ENCODE measurements at regions of chr16 and their contacts with region 1.

Region 1: DNA sequence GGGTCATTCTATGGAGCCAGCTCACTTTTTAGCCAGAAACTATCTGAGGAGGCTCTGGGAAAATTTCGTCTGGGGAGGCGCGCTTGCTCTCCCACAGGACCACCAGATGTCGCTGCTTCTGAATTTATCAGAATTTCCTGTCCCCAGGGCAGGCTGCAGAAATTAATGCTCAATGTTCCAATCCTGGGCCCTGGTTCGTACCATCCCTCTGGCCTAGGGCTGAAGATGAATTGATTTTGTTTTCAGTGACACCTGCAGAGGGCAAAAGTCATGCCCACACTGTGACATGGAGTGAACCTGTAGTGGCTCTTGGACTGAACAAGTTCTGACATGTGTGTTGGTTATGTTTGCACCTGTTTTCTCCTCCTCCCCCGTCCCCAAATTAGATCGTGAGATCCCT is 482.6 kb downstream of the NPIPA7 start:
- DNase-seq: peak; percentile 46
- ATAC-seq: peak; percentile 94
- H3K4me3 ChIP-seq: no peak overlapping the region
- H3K27ac ChIP-seq: no peak overlapping the region
- H3K4me1 ChIP-seq: peaks cover 4% of the 10 kb centered on the region; the same call in 1 of the 2 replicates
- H3K27me3 ChIP-seq: no peaks in the 10 kb centered on the region; a peak in 1 of 4 replicates
- CTCF ChIP-seq: peak; percentile 70 to 87 (median 86)
- EP300 ChIP-seq: no peak
- POLR2A ChIP-seq: no peak
- RAD21 ChIP-seq: peak; percentile 83

Region 2: GRCh38 chr16:16774389-16774788 is 87.2 kb before region 1 on chr16:
- CTCF ChIA-PET with region 1: no interaction called
- POLR2A ChIA-PET with region 1: no interaction called
- RAD21 ChIA-PET with region 1: no interaction called
- SMC1A ChIA-PET with region 1: no interaction called
- in situ Hi-C with region 1: no loop called
- intact Hi-C with region 1: no loop called
- DNase-seq: no peak
- ATAC-seq: no peak
- H3K4me3 ChIP-seq: no peak overlapping the region
- H3K27ac ChIP-seq: no peak overlapping the region
- H3K4me1 ChIP-seq: no peaks in the 10 kb centered on the region
- H3K27me3 ChIP-seq: no peaks in the 10 kb centered on the region
- CTCF ChIP-seq: no peak
- EP300 ChIP-seq: no peak
- POLR2A ChIP-seq: no peak
- RAD21 ChIP-seq: no peak

Region 3: DNA sequence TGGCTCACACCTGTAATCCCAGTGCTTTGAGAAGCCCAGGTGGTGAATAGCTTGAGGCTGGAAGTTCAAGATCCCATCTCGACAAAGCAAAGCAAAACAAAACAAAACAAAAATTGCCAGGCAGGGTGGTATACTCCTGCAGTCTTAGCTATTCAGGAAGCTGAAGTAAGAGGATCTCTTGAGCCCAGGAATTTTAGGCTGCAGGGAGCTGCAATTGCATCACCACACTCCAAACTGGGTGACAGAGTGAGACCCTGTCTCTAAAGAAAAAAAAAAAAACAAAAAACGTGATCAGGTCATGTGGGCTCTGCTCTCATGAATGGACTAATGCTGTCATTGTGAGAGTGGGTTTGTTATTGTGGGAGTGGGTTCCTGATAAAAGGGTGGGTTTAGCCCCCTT is 73.5 kb before region 1 on chr16:
- CTCF ChIA-PET with region 1: no interaction called
- POLR2A ChIA-PET with region 1: no interaction called
- RAD21 ChIA-PET with region 1: no interaction called
- SMC1A ChIA-PET with region 1: no interaction called
- in situ Hi-C with region 1: no loop called
- intact Hi-C with region 1: no loop called
- DNase-seq: no peak
- ATAC-seq: no peak
- H3K4me3 ChIP-seq: no peak overlapping the region
- H3K27ac ChIP-seq: no peak overlapping the region
- H3K4me1 ChIP-seq: no peaks in the 10 kb centered on the region
- H3K27me3 ChIP-seq: no peaks in the 10 kb centered on the region
- CTCF ChIP-seq: no peak
- EP300 ChIP-seq: no peak
- POLR2A ChIP-seq: no peak
- RAD21 ChIP-seq: no peak

Region 4: GRCh38 chr16:16879567-16880256 is 18.2 kb after region 1 on chr16:
- CTCF ChIA-PET with region 1: interaction called, 14 read pairs
- POLR2A ChIA-PET with region 1: no interaction called
- RAD21 ChIA-PET with region 1: no interaction called
- SMC1A ChIA-PET with region 1: interaction called, 5 read pairs
- in situ Hi-C with region 1: no loop called
- intact Hi-C with region 1: no loop called
- DNase-seq: no peak
- ATAC-seq: no peak
- H3K4me3 ChIP-seq: no peak overlapping the region
- H3K27ac ChIP-seq: no peak overlapping the region
- H3K4me1 ChIP-seq: no peaks in the 10 kb centered on the region
- H3K27me3 ChIP-seq: no peaks in the 10 kb centered on the region
- CTCF ChIP-seq: no peak
- EP300 ChIP-seq: no peak
- POLR2A ChIP-seq: no peak
- RAD21 ChIP-seq: no peak

Region 5: GRCh38 chr16:17070882-17071592 is 209.5 kb after region 1 on chr16:
- CTCF ChIA-PET with region 1: interaction called, 6 read pairs
- POLR2A ChIA-PET with region 1: interaction called, 5 read pairs
- RAD21 ChIA-PET with region 1: interaction called, 16 read pairs
- SMC1A ChIA-PET with region 1: interaction called, 11 read pairs
- in situ Hi-C with region 1: no loop called
- intact Hi-C with region 1: loop called (anchors 5 kb)
- DNase-seq: peak; percentile 98
- ATAC-seq: peak; percentile 81
- H3K4me3 ChIP-seq: peak overlapping the region; percentile 77
- H3K27ac ChIP-seq: peak overlapping the region; percentile 95
- H3K4me1 ChIP-seq: peaks cover 44% of the 10 kb centered on the region
- H3K27me3 ChIP-seq: no peaks in the 10 kb centered on the region
- CTCF ChIP-seq: 0 out of 6 replicates have a peak, but pooled peaks of 1 of the 3 experiments have one; percentile 16
- EP300 ChIP-seq: peak; percentile 89 to 94
- POLR2A ChIP-seq: no peak
- RAD21 ChIP-seq: 0 out of 2 replicates have a peak, but pooled peaks have one; percentile 23

Region 6: DNA sequence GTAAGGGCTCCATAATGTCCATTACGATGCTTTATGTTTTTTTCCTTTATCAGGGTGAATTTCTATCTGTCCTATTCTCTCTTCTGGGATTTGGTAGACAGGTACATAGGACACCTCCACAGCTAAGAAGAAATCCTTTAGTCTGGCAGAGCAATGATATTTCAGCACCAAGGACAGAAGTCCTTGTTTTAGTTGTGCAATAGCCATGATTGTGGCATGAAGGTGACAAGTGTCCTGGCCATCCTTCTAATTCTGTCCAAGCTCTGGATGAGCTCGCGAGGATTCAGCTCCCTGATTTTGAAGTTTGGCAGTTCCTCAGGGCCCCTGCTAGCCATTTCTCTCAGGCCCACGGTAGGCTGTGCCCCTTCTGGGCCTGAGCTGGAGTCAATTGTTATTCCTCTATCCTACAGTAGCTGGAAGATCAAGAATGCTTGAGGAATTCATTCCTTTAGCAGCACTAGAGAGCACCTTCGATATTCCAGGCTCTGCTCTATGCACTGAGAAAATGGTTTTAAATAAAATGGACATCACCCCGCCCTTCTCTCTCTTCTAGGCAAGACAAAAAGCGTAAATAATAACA is 288.4 kb after region 1 on chr16:
- CTCF ChIA-PET with region 1: interaction called, 14 read pairs
- POLR2A ChIA-PET with region 1: no interaction called
- RAD21 ChIA-PET with region 1: interaction called, 3 read pairs
- SMC1A ChIA-PET with region 1: interaction called, 4 read pairs
- in situ Hi-C with region 1: no loop called
- intact Hi-C with region 1: no loop called
- DNase-seq: no peak
- ATAC-seq: no peak
- H3K4me3 ChIP-seq: no peak overlapping the region
- H3K27ac ChIP-seq: no peak overlapping the region
- H3K4me1 ChIP-seq: 0 out of 2 replicates have a peak, but pooled peaks cover 3% of the 10 kb centered on the region
- H3K27me3 ChIP-seq: no peaks in the 10 kb centered on the region
- CTCF ChIP-seq: no peak
- EP300 ChIP-seq: no peak
- POLR2A ChIP-seq: no peak
- RAD21 ChIP-seq: no peak

Region 7: GRCh38 chr16:17211797-17212196 is 350.3 kb after region 1 on chr16:
- CTCF ChIA-PET with region 1: interaction called, 6 read pairs
- POLR2A ChIA-PET with region 1: no interaction called
- RAD21 ChIA-PET with region 1: interaction called, 5 read pairs
- SMC1A ChIA-PET with region 1: interaction called, 5 read pairs
- in situ Hi-C with region 1: no loop called
- intact Hi-C with region 1: loop called (anchors 5 kb)
- DNase-seq: no peak
- ATAC-seq: peak; percentile 88
- H3K4me3 ChIP-seq: no peak overlapping the region
- H3K27ac ChIP-seq: no peak overlapping the region
- H3K4me1 ChIP-seq: no peaks in the 10 kb centered on the region
- H3K27me3 ChIP-seq: no peaks in the 10 kb centered on the region
- CTCF ChIP-seq: peak; percentile 57 to 62 (median 62); a peak in 5 of 6 replicates
- EP300 ChIP-seq: no peak
- POLR2A ChIP-seq: no peak
- RAD21 ChIP-seq: peak; percentile 61

Region 8: GRCh38 chr16:17343028-17343427 is 481.5 kb after region 1 on chr16:
- CTCF ChIA-PET with region 1: interaction called, 3 read pairs
- POLR2A ChIA-PET with region 1: no interaction called
- RAD21 ChIA-PET with region 1: interaction called, 3 read pairs
- SMC1A ChIA-PET with region 1: interaction called, 3 read pairs
- in situ Hi-C with region 1: loop called (anchors 10 kb)
- intact Hi-C with region 1: no loop called
- DNase-seq: peak; percentile 63
- ATAC-seq: peak; percentile 81
- H3K4me3 ChIP-seq: no peak overlapping the region
- H3K27ac ChIP-seq: peak overlapping the region; percentile 52
- H3K4me1 ChIP-seq: peaks cover 68% of the 10 kb centered on the region
- H3K27me3 ChIP-seq: no peaks in the 10 kb centered on the region
- CTCF ChIP-seq: no peak
- EP300 ChIP-seq: peak; percentile 88 to 96
- POLR2A ChIP-seq: peak; percentile 19; the same call in 1 of the 2 replicates
- RAD21 ChIP-seq: peak; percentile 25; the same call in 1 of the 2 replicates

Region 9: DNA sequence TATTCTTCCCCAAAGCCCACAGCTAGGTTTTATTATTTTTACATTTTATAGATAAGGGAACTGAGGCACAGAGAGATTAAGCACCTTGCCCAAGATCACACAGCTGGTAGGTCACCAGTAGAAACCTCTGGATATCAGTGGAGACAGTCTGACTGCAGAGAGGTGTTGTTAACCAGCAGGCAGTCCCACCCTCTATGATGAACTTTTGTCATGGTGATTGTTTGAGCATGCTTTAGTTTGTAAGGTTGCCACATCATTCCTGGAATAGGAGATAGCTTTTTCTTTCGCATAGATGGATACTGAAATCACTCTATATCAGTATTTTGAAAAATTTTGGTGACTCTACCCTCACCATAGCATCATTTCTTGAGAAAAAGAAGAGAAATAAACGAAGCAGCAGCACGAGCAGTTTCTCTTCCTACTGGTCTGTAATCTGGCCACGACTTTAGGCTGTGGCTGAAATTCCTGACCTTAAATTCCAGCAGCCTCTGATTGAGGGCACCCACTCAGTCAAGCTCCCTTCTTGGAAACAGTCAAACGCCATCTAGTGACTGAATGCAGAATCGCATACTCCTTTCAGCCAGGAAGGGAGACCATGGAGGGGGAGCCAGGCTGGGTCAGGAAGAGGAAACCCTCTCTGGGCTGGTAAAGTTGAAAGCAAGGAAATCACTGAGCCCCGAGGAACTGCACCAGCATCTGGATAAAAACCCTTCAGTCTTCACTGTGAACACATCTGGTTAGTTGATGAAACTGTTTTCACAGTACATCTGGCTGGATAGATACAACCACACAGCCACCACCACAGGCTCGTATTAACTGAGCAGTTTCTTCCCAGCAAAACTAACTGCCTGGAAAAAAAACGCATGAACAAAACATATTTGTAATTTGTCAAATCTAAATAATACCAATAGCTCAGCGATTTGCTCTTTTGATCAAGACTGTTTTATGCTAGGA is 717.7 kb after region 1 on chr16:
- CTCF ChIA-PET with region 1: interaction called, 10 read pairs
- POLR2A ChIA-PET with region 1: no interaction called
- RAD21 ChIA-PET with region 1: interaction called, 9 read pairs
- SMC1A ChIA-PET with region 1: interaction called, 17 read pairs
- in situ Hi-C with region 1: no loop called
- intact Hi-C with region 1: no loop called
- DNase-seq: peak; percentile 28
- ATAC-seq: peak; percentile 93
- H3K4me3 ChIP-seq: no peak overlapping the region
- H3K27ac ChIP-seq: no peak overlapping the region
- H3K4me1 ChIP-seq: no peaks in the 10 kb centered on the region
- H3K27me3 ChIP-seq: no peaks in the 10 kb centered on the region
- CTCF ChIP-seq: peak; percentile 83 to 89 (median 84)
- EP300 ChIP-seq: no peak
- POLR2A ChIP-seq: no peak
- RAD21 ChIP-seq: peak; percentile 82

Measured in GM12878 (cell line).